HCT116 (cell line): ENCODE measurements at regions of chr20 and their contacts with region 1.

Region 1: GRCh38 chr20:324177-325044 is 941 bp upstream of the SOX12 start:
- DNase-seq: peak; percentile 89
- ATAC-seq: peak; percentile 64
- H3K4me3 ChIP-seq: peak overlapping the region; percentile 84 to 87
- H3K27ac ChIP-seq: peak overlapping the region; percentile 99
- H3K4me1 ChIP-seq: peaks cover 11 to 48% of the 10 kb centered on the region in 2 experiments; a peak in 3 of 4 replicates
- H3K27me3 ChIP-seq: no peaks in the 10 kb centered on the region
- CTCF ChIP-seq: peak in 1 of 3 experiments; percentile 40; a peak in 1 of 6 replicates
- POLR2A ChIP-seq: peak; percentile 81
- RAD21 ChIP-seq: no peak

Region 2: DNA sequence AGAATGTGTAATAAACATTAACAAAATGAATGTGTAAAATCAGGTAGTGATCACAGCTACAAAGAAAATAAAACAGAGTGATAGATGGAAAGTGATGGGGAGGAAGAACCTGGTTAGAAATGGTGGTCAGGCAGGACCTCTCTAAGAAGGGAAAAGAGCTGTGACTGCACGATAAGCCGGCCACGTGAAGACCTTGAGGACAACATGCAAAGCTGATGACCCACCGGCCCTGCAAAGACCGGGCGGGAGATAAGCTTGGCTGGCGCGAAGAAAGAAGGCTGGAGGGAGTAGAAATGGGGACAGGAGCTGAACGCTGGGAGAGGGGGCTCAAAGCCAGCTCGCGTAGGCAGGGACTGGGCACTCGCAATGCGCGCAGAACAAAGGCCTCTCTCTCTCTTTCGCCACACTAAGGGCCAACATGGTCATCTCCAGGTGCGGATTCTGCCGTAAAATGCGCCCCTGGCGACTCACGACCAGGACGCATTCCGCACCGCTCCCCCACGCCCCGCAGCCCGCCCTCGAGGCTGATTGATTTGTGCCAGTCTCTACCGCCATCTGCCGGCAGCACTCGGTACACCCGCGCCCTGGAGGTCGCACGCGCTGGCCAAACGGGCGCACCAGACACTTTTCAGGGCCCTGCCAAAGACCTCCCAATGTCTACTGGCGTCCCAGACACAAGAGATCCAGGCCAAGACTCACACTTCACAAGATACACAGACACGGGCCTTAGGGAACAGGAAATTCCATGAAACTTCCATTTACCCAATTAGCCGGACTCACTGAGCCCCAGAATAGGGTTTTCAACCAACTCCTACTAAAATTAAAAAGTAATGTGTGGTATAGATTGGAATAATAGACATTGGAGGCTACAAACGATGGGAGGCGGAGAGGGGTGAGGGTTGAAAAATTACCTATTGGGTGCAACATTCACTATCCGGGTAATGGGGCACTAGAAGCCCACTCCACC is 57.5 kb before region 1 on chr20:
- CTCF ChIA-PET with region 1: no interaction called
- POLR2A ChIA-PET with region 1: interaction called, 3 read pairs
- RAD21 ChIA-PET with region 1: no interaction called
- intact Hi-C with region 1: loop called (anchors 2 kb)
- DNase-seq: peak; percentile 65
- ATAC-seq: peak; percentile 90
- H3K4me3 ChIP-seq: peak overlapping the region; percentile 20 to 26; a peak in 2 of 4 replicates
- H3K27ac ChIP-seq: no peak overlapping the region; the same call in 1 of the 2 replicates
- H3K4me1 ChIP-seq: peaks cover 6 to 9% of the 10 kb centered on the region in 2 experiments
- H3K27me3 ChIP-seq: no peaks in the 10 kb centered on the region
- CTCF ChIP-seq: peak; percentile 86 to 95 (median 87)
- POLR2A ChIP-seq: no peak
- RAD21 ChIP-seq: peak; percentile 90

Region 3: DNA sequence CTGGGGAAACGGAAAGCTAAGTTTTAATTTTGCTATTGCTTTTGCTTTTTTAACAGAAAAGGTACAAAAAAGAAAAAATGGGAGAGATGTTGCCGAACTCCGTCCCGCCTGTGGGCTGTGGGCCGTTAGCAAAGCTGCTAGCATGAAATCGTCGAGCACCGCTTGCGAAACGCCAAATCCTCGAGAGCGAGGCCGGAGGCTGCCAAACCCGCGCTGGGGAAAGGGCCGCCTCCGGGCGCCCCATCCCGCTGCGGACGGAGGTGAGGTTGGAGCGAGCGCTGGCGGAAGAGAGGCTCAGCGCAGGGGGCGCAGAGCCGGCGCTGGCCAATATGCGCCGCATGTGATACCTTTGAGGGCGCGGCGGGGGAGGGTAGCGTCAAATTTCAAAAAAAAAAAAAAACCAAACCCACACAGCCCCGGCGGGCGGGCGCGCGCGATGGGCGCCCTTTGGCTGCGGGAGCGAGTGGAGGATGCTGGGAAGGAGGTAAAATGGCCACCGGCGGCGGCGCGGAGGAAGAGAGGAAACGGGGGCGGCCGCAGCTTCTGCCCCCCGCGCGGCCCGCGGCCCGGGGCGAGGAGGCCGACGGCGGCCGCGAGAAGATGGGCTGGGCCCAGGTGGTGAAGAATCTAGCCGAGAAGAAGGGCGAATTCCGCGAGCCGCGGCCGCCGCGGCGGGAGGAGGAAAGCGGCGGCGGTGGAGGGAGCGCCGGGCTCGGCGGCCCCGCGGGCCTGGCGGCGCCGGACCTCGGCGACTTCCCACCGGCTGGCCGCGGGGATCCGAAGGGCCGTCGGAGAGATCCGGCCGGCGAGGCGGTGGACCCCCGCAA is 27.1 kb before region 1 on chr20 and contains the start of gene ZCCHC3:
- CTCF ChIA-PET with region 1: interaction called, 4 read pairs
- POLR2A ChIA-PET with region 1: interaction called, 12 read pairs
- RAD21 ChIA-PET with region 1: interaction called in 1 of 2 experiments, 3 read pairs
- intact Hi-C with region 1: loop called (anchors 1 kb)
- DNase-seq: peak; percentile 77
- ATAC-seq: peak; percentile 85
- H3K4me3 ChIP-seq: peak within 1 kb of the TSS; percentile 62 to 88
- H3K27ac ChIP-seq: peak within 1 kb of the TSS; percentile 99
- H3K4me1 ChIP-seq: peaks cover 20 to 45% of the 10 kb centered on the region in 2 experiments
- H3K27me3 ChIP-seq: no peaks in the 10 kb centered on the region
- CTCF ChIP-seq: no peak
- POLR2A ChIP-seq: no peak
- RAD21 ChIP-seq: no peak; the same call in 1 of the 2 replicates
- total RNA-seq, gene ZCCHC3: 19.3 TPM